Mucosa of descending colon (tissue), 3 donors: ENCODE measurements at regions of chr1 and their contacts with region 1.

Region 1: GRCh38 chr1:153946622-153947241 is at the start of gene DENND4B:
- DNase-seq: peak; percentile 83 to 89 (median 89)
- ATAC-seq: peak; percentile 88
- H3K4me3 ChIP-seq: peak within 1 kb of the TSS; percentile 87
- H3K4me1 ChIP-seq: peaks cover 13% of the 10 kb centered on the region
- CTCF ChIP-seq: peak; percentile 91
- total RNA-seq, gene DENND4B: 44.3 to 65.6 (median 46.5) TPM

Region 2: GRCh38 chr1:153796791-153797659 is 149.7 kb before region 1 on chr1:
- intact Hi-C with region 1: loop called in 1 of 2 experiments (anchors 10 kb)
- DNase-seq: peak; percentile 60 to 98 (median 71)
- ATAC-seq: peak; percentile 88
- H3K4me3 ChIP-seq: no peak overlapping the region
- H3K4me1 ChIP-seq: peaks cover 4% of the 10 kb centered on the region
- CTCF ChIP-seq: peak; percentile 76

Region 3: GRCh38 chr1:153827168-153827964 is 119.4 kb before region 1 on chr1:
- intact Hi-C with region 1: loop called in 1 of 2 experiments (anchors 10 kb)
- DNase-seq: no peak
- ATAC-seq: no peak
- H3K4me3 ChIP-seq: no peak overlapping the region
- H3K4me1 ChIP-seq: peaks cover 3% of the 10 kb centered on the region
- CTCF ChIP-seq: no peak

Region 4: DNA sequence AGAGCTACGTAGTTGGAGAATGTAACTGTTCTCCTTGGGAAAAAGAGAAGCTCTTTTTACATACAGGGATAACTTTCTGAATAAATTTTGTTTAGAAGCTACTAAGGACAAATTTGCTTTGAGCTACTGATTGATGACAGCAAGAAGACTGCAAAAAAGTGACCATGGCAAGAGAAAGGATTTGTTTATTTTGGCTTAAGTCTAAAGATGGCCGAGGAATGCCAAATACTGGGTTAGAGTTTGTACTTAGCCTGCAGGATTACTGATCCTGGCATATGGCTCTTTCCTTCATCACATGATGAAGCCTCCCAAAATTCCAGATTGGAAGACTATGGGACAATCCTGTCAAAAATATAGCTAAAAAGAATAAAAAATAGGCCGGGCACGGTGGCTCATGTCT is 72.5 kb after region 1 on chr1:
- intact Hi-C with region 1: no loop called
- DNase-seq: no peak
- ATAC-seq: no peak
- H3K4me3 ChIP-seq: no peak overlapping the region
- H3K4me1 ChIP-seq: no peaks in the 10 kb centered on the region
- CTCF ChIP-seq: no peak

Region 5: GRCh38 chr1:154081386-154082126 is 134.8 kb after region 1 on chr1:
- intact Hi-C with region 1: no loop called
- DNase-seq: no peak
- ATAC-seq: no peak
- H3K4me3 ChIP-seq: no peak overlapping the region
- H3K4me1 ChIP-seq: no peaks in the 10 kb centered on the region
- CTCF ChIP-seq: no peak